ENCODE measurements at regions of chr12 and their contacts with region 1.

Region 1: GRCh38 chr12:28172434-28173030 is 17.7 kb upstream of the CCDC91 start:
- DNase-seq: peak in 1 of 2 donors; percentile 23
- ATAC-seq: peak; percentile 89

Region 2: DNA sequence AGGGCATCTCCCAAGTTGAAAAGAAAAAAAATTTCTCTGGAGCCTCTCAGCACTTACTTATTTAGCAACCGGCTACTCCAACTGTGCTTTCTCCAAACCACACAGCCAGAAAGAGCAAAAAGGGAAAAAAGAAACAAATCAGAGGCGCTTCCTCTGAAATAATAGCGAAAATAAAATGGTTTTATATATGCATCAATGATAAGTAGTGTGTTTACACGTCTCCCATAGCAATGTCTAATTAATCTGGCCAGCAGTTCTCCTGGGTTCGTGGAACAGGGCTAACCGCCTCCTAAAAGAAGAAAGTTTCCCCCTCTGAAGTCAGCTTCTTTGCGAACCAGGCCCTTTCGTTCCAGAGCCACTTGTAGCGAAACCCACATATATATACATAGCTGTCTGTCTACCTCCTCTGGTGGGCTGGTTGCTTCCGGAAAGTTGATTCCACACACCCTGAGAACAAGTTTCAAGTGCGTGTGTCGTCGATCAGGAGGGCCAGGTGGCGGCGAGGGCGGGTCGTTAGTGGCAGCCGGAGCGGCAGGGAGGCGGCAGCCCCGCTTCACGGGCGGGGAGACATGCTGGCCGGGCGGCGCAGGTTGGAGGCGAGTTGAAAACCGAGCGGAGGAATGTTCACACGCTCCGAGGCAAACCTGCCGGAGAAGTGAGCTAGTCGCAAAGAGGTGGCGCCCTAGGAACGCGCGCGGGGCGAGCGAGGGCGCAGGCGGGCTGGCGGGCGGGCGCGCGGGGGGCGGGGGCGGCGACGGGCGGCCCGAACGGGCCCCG is 202.7 kb before region 1 on chr12:
- intact Hi-C with region 1: loop called in 1 of 2 experiments (anchors 10 kb)
- DNase-seq: peak; percentile 34 to 50
- ATAC-seq: peak; percentile 70

Measured in left colon (tissue), 2 donors.